ENCODE measurements at regions of chr7 and their contacts with region 1.

Region 1: GRCh38 chr7:73851410-73852234 is 9.3 kb upstream of the METTL27 start:
- DNase-seq: peak; percentile 57 to 79 (median 73)
- H3K4me3 ChIP-seq: no peak overlapping the region
- H3K4me3 Mint-ChIP-seq: peak overlapping the region in 1 of 2 donors; percentile 15
- H3K27ac ChIP-seq: peak overlapping the region; percentile 6 to 56
- H3K27ac Mint-ChIP-seq: peak overlapping the region; percentile 76 to 91 (median 87)
- H3K4me1 ChIP-seq: peaks cover 34 to 47% of the 10 kb centered on the region in 2 donors
- H3K4me1 Mint-ChIP-seq: peaks cover 41% of the 10 kb centered on the region
- H3K27me3 ChIP-seq: peaks cover 3 to 23% of the 10 kb centered on the region in 2 donors
- H3K27me3 Mint-ChIP-seq: peaks cover 28 to 47% (median 35%) of the 10 kb centered on the region in 3 donors
- CTCF ChIP-seq: no peak

Region 2: GRCh38 chr7:73606801-73607691 is 244.6 kb before region 1 on chr7:
- intact Hi-C with region 1: loop called in 1 of 2 experiments (anchors 10 kb)
- DNase-seq: peak; percentile 37 to 51 (median 50)
- H3K4me3 ChIP-seq: peak overlapping the region in 1 of 3 experiments; percentile 40
- H3K4me3 Mint-ChIP-seq: peak overlapping the region in 1 of 2 donors; percentile 81
- H3K27ac ChIP-seq: no peak overlapping the region
- H3K27ac Mint-ChIP-seq: peak overlapping the region in 3 of 7 donors; percentile 11 to 72 (median 48)
- H3K4me1 ChIP-seq: peaks cover 17 to 24% of the 10 kb centered on the region in 2 donors
- H3K4me1 Mint-ChIP-seq: peaks cover 21% of the 10 kb centered on the region
- H3K27me3 ChIP-seq: peaks cover 0 to 57% of the 10 kb centered on the region in 2 donors
- H3K27me3 Mint-ChIP-seq: peaks cover 60 to 85% (median 78%) of the 10 kb centered on the region in 3 donors
- CTCF ChIP-seq: peak; percentile 99

Region 3: DNA sequence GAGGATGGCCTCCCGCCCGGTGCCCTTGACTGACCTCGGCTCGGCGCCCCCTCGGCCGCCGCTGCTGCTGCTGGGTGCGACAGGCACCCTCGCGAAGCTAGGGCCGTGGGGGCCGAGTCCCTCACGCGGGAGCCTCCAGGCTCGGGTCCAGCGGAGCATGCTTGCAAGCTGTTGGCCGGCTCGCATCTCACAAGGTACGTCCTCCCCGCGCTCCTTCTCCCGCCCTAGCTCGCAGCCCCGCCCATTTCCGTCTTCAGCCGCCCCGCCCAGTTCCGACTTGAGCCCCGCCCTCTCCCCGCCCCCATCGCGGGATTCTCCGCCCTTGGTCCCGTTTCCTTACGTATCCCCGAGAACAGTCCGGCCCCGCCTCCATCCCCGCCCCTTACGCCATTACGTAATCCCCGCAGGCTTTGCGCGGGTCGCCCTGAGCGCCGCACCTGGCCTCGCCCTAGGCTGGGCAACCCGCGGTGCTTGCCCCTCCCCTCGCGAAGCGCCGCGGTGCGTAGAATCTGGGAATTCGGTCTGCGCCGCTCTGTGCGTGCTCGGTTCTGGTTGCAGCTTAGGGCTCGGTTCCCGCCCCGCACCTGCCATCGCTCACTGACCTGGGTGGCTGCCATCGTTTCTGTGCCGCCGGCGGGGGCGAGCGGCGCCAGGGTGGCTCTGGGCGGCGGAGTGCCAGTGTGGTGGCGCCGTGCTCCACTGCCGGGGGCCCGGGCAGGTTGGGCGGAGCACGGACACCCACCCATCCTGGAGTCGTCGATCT is 112.8 kb before region 1 on chr7 and contains the start of gene ABHD11:
- intact Hi-C with region 1: loop called in 1 of 2 experiments (anchors 10 kb)
- DNase-seq: peak; percentile 84 to 95 (median 93)
- H3K4me3 ChIP-seq: peak within 1 kb of the TSS; percentile 60 to 87 (median 78)
- H3K4me3 Mint-ChIP-seq: peak within 1 kb of the TSS; percentile 93
- H3K27ac ChIP-seq: peak within 1 kb of the TSS; percentile 62 to 77
- H3K27ac Mint-ChIP-seq: peak within 1 kb of the TSS; percentile 78 to 95 (median 90)
- H3K4me1 ChIP-seq: peaks cover 26 to 36% of the 10 kb centered on the region in 2 donors
- H3K4me1 Mint-ChIP-seq: peaks cover 20% of the 10 kb centered on the region
- H3K27me3 ChIP-seq: peaks cover 0 to 12% of the 10 kb centered on the region in 2 donors
- H3K27me3 Mint-ChIP-seq: peaks cover 12 to 29% (median 29%) of the 10 kb centered on the region in 3 donors
- CTCF ChIP-seq: no peak
- polyA plus RNA-seq, gene ABHD11: 20.3 to 23.5 (median 22.1) TPM

Region 4: GRCh38 chr7:73811760-73812168 is 39.9 kb before region 1 on chr7:
- intact Hi-C with region 1: loop called (anchors 1 to 2 kb)
- DNase-seq: peak; percentile 36 to 63 (median 59)
- H3K4me3 ChIP-seq: no peak overlapping the region
- H3K4me3 Mint-ChIP-seq: no peak overlapping the region
- H3K27ac ChIP-seq: no peak overlapping the region
- H3K27ac Mint-ChIP-seq: no peak overlapping the region
- H3K4me1 ChIP-seq: no peaks in the 10 kb centered on the region
- H3K4me1 Mint-ChIP-seq: no peaks in the 10 kb centered on the region
- H3K27me3 ChIP-seq: peaks cover 0 to 3% of the 10 kb centered on the region in 2 donors
- H3K27me3 Mint-ChIP-seq: peaks cover 9 to 15% (median 14%) of the 10 kb centered on the region in 3 donors
- CTCF ChIP-seq: peak; percentile 88

Region 5: GRCh38 chr7:73828107-73828803 is 23.4 kb before region 1 on chr7:
- intact Hi-C with region 1: loop called in 1 of 2 experiments (anchors 2 kb)
- DNase-seq: peak in 1 of 3 donors; percentile 58
- H3K4me3 ChIP-seq: no peak overlapping the region
- H3K4me3 Mint-ChIP-seq: peak overlapping the region in 1 of 2 donors; percentile 72
- H3K27ac ChIP-seq: no peak overlapping the region
- H3K27ac Mint-ChIP-seq: peak overlapping the region in 1 of 7 donors; percentile 60
- H3K4me1 ChIP-seq: peaks cover 38 to 49% of the 10 kb centered on the region in 2 donors
- H3K4me1 Mint-ChIP-seq: peaks cover 42% of the 10 kb centered on the region
- H3K27me3 ChIP-seq: peaks cover 0 to 17% of the 10 kb centered on the region in 2 donors
- H3K27me3 Mint-ChIP-seq: peaks cover 29 to 52% (median 32%) of the 10 kb centered on the region in 3 donors
- CTCF ChIP-seq: no peak

Region 6: DNA sequence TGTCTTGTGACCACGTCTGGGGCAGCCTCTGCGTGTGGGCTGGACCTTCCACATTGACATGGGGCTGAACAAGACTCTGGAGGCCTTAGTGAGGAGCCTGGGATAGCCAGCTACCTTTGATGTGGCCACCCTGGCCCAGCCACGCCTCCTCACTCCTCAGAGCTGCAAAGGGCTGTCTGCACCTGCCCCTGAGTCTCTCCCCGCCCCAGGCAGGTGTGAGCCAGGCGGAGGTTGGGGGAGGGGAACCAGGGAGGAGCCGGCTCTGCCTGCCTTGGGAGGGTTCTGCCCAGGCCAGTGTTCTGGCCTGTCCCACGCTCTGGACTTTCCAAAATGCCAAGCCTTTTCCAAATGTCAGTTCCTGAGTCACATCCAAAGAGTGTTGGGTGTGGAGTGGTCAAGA is 674.3 kb after region 1 on chr7:
- intact Hi-C with region 1: no loop called
- DNase-seq: no peak
- H3K4me3 ChIP-seq: no peak overlapping the region
- H3K4me3 Mint-ChIP-seq: no peak overlapping the region
- H3K27ac ChIP-seq: no peak overlapping the region
- H3K27ac Mint-ChIP-seq: no peak overlapping the region
- H3K4me1 ChIP-seq: no peaks in the 10 kb centered on the region
- H3K4me1 Mint-ChIP-seq: no peaks in the 10 kb centered on the region
- H3K27me3 ChIP-seq: no peaks in the 10 kb centered on the region
- H3K27me3 Mint-ChIP-seq: no peaks in the 10 kb centered on the region
- CTCF ChIP-seq: no peak

Measured in CD14-positive monocyte (primary cell).